PC-9 (cell line): ENCODE measurements at regions of chr4 and their contacts with region 1.

Region 1: GRCh38 chr4:65798498-65799127 is 128.3 kb upstream of the EPHA5 start:
- DNase-seq: no peak
- H3K4me3 ChIP-seq: no peak overlapping the region
- H3K27ac ChIP-seq: no peak overlapping the region
- H3K4me1 ChIP-seq: no peaks in the 10 kb centered on the region
- H3K27me3 ChIP-seq: no peaks in the 10 kb centered on the region
- CTCF ChIP-seq: no peak

Region 2: GRCh38 chr4:65223601-65224000 is 575.0 kb before region 1 on chr4:
- CTCF ChIA-PET with region 1: no interaction called
- POLR2A ChIA-PET with region 1: no interaction called
- intact Hi-C with region 1: no loop called
- DNase-seq: no peak
- H3K4me3 ChIP-seq: no peak overlapping the region
- H3K27ac ChIP-seq: no peak overlapping the region
- H3K4me1 ChIP-seq: no peaks in the 10 kb centered on the region
- H3K27me3 ChIP-seq: no peaks in the 10 kb centered on the region
- CTCF ChIP-seq: no peak

Region 3: DNA sequence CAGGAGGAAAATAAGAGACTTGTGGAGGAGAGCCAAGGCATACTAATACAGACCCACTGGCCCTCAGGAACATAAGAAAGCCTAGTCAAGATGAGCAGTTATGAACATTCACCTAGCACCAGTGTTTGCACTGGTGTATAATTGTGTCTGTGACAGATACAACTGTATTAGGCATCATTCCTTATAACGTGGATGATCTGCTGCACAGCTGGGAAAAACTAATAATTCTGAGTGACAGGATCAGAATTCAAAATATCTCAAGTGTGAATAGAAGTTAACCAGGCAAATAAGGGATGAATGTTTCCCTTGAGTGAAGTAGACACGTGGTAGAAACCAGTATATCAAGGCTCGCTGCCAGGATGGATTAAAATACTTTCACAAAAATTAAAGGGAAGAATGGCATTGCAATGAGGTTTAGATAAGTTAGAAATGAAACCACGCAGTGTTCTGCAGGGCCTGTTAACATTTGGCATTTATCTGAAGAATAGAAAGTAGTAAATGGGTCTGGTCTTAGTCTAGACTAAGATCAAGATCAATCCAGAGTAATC is 454.3 kb before region 1 on chr4:
- CTCF ChIA-PET with region 1: no interaction called
- POLR2A ChIA-PET with region 1: no interaction called
- intact Hi-C with region 1: no loop called
- DNase-seq: no peak
- H3K4me3 ChIP-seq: no peak overlapping the region
- H3K27ac ChIP-seq: no peak overlapping the region
- H3K4me1 ChIP-seq: no peaks in the 10 kb centered on the region
- H3K27me3 ChIP-seq: no peaks in the 10 kb centered on the region
- CTCF ChIP-seq: no peak

Region 4: DNA sequence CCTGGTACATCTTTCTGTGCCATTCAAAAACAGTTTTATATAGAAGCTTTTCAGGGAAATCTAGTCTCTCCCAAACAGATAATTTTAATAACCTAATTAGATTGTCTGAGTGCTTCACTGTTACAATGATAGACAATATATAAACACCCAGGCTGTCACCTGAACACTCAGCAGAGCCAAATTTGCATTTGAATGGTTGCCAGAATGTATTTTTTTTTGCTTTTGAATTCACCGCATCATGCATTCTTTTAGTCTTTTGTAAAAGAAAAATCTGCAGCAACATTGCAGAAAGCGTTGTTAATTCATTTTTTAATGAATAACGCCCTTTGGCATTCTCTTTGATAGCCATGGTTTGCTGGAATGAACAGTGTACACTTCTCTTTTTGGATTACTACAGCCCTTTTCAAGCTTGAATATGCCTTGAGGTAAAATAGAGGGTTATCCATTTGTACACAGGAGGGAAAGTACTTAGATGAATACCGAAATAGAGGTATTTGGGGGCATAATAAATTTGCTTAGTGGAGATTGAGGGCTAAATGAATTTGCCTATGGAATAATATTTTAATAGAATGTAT is 46.7 kb after region 1 on chr4:
- CTCF ChIA-PET with region 1: no interaction called
- POLR2A ChIA-PET with region 1: no interaction called
- intact Hi-C with region 1: loop called (anchors 1 kb)
- DNase-seq: no peak
- H3K4me3 ChIP-seq: no peak overlapping the region
- H3K27ac ChIP-seq: no peak overlapping the region
- H3K4me1 ChIP-seq: no peaks in the 10 kb centered on the region
- H3K27me3 ChIP-seq: no peaks in the 10 kb centered on the region
- CTCF ChIP-seq: no peak